ENCODE measurements at regions of chr9 and their contacts with region 1.

Region 1: GRCh38 chr9:92488681-92489550 is 6.6 kb upstream of the ASPN start:
- DNase-seq: no peak
- H3K4me3 ChIP-seq: no peak overlapping the region
- H3K27ac ChIP-seq: peak overlapping the region; percentile 30 to 78 (median 64)
- H3K4me1 ChIP-seq: peaks cover 0 to 69% (median 39%) of the 10 kb centered on the region in 4 donors
- H3K27me3 ChIP-seq: no peaks in the 10 kb centered on the region
- CTCF ChIP-seq: no peak
- EP300 ChIP-seq: no peak
- POLR2A ChIP-seq: no peak

Region 2: DNA sequence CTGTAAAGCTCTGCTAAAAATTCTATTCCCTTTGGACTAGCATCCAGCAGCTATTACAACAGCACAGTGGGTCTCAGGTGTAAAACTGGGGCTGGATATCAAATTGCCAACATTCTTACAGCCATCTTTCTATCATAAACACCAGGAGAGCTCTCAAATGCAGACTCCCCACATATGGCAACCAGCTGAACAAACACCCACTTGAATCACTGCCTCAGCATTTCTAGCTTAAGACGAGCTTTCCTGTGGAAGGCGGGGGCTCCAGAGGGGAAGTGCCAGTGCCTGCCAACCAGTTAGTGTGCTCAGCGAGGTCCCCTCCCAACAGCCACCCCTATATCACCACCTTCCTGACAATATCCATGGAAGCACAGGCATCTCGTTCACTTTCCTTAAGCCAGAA is 118.9 kb after region 1 on chr9:
- intact Hi-C with region 1: loop called (anchors 5 kb)
- DNase-seq: no peak
- H3K4me3 ChIP-seq: no peak overlapping the region
- H3K27ac ChIP-seq: peak overlapping the region; percentile 3 to 72 (median 69)
- H3K4me1 ChIP-seq: peaks cover 0 to 43% (median 32%) of the 10 kb centered on the region in 4 donors
- H3K27me3 ChIP-seq: no peaks in the 10 kb centered on the region
- CTCF ChIP-seq: no peak
- EP300 ChIP-seq: no peak
- POLR2A ChIP-seq: no peak